GM10248 (cell line): ENCODE measurements at regions of chr19 and their contacts with region 1.

Region 1: DNA sequence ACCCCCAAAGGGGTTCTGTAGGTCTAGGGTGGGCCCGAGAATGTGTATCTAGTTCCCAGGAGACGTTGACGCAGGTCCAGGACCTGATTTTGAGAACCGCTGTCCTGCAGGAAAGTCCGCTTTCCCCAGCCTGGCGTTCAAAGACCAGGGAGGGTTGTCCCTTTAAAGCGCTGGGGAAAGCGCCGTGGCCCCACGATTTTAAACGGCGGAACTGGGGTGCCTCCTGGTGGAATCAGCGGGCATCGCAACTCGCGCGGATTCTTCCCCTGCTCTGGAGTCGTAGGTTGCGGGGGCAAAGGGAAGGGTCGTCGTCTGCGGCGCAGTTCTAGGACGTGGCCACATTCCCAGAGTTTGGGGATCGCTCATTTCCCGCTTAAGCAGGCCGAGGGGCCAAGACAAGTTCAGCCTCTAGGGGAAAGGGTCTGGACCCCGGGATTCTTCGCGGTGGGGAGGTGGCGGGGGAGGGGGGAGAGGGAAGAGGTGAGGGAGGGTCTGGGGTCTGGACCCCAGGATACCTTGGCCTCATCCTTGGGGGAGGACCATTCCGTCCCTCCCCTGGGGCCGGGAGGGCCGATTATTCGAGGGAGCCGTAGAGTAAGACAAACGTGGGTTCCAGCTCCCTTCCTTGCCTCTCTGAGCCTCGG is 7.7 kb downstream of the PNMA8B start:
- DNase-seq: peak; percentile 88
- CTCF ChIP-seq: peak; percentile 88

Region 2: GRCh38 chr19:46279177-46279576 is 208.7 kb before region 1 on chr19:
- CTCF ChIA-PET with region 1: interaction called, 21 read pairs
- POLR2A ChIA-PET with region 1: no interaction called
- DNase-seq: no peak
- CTCF ChIP-seq: no peak

Region 3: GRCh38 chr19:46392243-46392801 is 95.6 kb before region 1 on chr19:
- CTCF ChIA-PET with region 1: interaction called, 53 read pairs
- POLR2A ChIA-PET with region 1: no interaction called
- DNase-seq: no peak
- CTCF ChIP-seq: no peak

Region 4: GRCh38 chr19:46404055-46404752 is 83.7 kb before region 1 on chr19:
- CTCF ChIA-PET with region 1: interaction called, 70 read pairs
- POLR2A ChIA-PET with region 1: interaction called, 3 read pairs
- DNase-seq: no peak
- CTCF ChIP-seq: no peak

Region 5: GRCh38 chr19:46426506-46427162 is 61.3 kb before region 1 on chr19:
- CTCF ChIA-PET with region 1: no interaction called
- POLR2A ChIA-PET with region 1: no interaction called
- DNase-seq: no peak
- CTCF ChIP-seq: no peak